Dorsolateral prefrontal cortex (tissue), 120 donors: ENCODE measurements at regions of chr2 and their contacts with region 1.

Region 1: DNA sequence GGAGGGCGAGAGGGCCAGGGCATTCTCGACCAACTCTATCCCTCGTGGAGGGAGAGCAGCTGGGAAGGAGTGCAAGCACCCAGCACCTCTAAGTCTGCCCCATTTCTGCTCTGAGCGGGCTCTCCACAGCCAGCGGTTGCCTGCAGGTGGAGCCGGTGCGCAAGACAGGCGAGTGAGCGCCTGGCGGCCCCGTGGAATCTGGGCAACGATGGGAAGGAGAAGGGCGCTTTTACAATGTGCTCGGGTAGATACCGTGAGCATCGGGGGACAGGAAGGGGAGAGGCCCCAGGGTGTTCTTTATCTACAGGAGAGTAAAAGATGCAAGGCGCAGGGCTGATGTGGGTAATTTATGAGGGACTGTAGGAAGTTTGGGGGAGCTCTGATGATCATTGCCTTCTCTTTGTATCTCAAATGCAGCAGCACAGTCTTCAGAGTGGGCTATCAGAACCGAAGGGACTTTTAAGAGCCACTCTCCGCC is 867 bp upstream of the TTL start:
- DNase-seq: peak; percentile 77 to 92 (median 86)
- H3K4me3 ChIP-seq: peak overlapping the region; percentile 57 to 97 (median 83)
- H3K27ac ChIP-seq: peak overlapping the region; percentile 74 to 97 (median 91)
- H3K27me3 ChIP-seq: no peaks in the 10 kb centered on the region
- CTCF ChIP-seq: peak; percentile 51 to 95 (median 83)

Region 2: DNA sequence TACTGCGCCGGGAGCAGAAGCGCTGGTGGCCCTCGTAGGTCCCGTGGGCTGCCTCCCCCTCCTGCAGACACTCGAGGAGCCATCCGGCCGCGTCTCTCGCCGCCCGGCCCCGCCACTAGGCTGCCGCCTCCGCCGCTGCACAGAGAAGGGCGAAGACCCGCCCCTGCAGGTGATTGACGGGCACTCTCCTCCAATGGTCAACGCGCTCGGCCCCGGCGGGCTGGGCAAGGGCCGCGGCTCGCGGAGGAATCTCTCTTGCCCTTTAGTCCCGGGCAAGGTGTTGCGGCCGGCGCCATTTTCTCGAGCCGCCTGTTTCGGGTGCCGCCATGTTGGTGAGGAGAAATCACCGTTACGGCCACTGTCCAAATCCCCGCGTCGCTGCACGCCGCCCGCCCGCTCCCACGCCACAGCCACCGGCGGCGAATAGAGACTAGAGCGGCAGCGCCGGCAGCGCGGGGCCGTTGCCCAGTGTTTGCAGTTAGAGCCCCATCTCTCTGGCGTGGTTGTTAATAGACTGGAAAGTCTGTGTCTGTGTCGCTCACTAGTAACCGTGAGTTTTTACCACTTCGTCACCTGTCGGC is 205.7 kb before region 1 on chr2 and contains the start of gene ZC3H6:
- intact Hi-C with region 1: loop called (anchors 5 kb)
- DNase-seq: peak; percentile 97 to 100 (median 99)
- H3K4me3 ChIP-seq: peak within 1 kb of the TSS; percentile 68 to 99 (median 90)
- H3K27ac ChIP-seq: peak within 1 kb of the TSS; percentile 98 to 100 (median 100)
- H3K27me3 ChIP-seq: no peaks in the 10 kb centered on the region
- CTCF ChIP-seq: peak in 49 of 56 donors; percentile 9 to 68 (median 42)
- total RNA-seq, gene ZC3H6: 20.4 to 50.4 (median 36.4) TPM

Region 3: GRCh38 chr2:112304298-112304941 is 176.7 kb before region 1 on chr2:
- intact Hi-C with region 1: no loop called
- DNase-seq: no peak
- H3K4me3 ChIP-seq: no peak overlapping the region
- H3K27ac ChIP-seq: peak overlapping the region in 3 of 59 donors; percentile 2 to 12 (median 10)
- H3K27me3 ChIP-seq: no peaks in the 10 kb centered on the region
- CTCF ChIP-seq: no peak

Region 4: GRCh38 chr2:112343827-112344585 is 137.1 kb before region 1 on chr2:
- intact Hi-C with region 1: no loop called
- DNase-seq: no peak
- H3K4me3 ChIP-seq: no peak overlapping the region
- H3K27ac ChIP-seq: no peak overlapping the region
- H3K27me3 ChIP-seq: no peaks in the 10 kb centered on the region
- CTCF ChIP-seq: no peak

Region 5: GRCh38 chr2:112542123-112542983 is 61.3 kb after region 1 on chr2 and contains the start of gene POLR1B:
- intact Hi-C with region 1: loop called (anchors 1 kb)
- DNase-seq: peak; percentile 79 to 91 (median 88)
- H3K4me3 ChIP-seq: peak within 1 kb of the TSS; percentile 68 to 100 (median 95)
- H3K27ac ChIP-seq: peak within 1 kb of the TSS; percentile 84 to 99 (median 96)
- H3K27me3 ChIP-seq: no peaks in the 10 kb centered on the region
- CTCF ChIP-seq: peak in 17 of 56 donors; percentile 9 to 46 (median 30)
- total RNA-seq, gene POLR1B: 10.4 to 27.6 (median 17.8) TPM

Region 6: DNA sequence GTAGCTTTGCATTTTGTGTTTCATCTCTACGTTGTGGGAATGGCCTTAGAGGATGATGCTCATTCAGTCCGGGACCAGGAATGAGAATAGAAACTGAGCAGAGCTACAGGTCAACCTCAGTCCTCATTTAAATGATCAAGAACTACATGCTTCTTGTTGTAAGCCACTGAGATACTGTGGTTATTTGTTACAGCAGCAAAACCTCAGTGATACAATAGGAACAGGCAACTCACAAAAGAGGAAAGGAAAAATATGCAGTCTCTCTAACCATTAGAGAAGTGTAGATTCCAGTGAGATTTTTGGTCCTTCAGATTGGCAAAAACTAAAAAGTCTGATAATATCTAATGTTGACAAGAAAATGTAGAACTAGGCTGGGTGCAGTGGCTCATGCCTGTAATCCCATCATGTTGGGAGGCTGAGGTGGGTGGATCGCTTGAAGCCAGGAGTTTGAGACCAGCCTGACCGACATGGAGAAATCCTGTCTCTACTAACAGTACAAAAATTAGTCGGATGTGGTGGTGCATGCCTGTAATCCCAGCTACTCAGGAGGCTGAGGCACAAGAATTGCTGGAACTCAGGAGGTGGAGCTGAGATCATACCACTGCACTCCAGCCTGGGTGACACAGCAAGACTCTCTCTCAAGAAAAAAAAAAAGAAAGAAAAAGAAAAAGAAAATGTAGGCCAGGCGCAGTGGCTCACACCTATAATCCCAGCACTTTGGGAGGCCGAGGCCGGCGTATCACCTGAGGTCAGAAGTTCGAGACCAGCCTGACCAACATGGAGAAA is 116.6 kb after region 1 on chr2:
- intact Hi-C with region 1: no loop called
- DNase-seq: no peak
- H3K4me3 ChIP-seq: no peak overlapping the region
- H3K27ac ChIP-seq: no peak overlapping the region
- H3K27me3 ChIP-seq: no peaks in the 10 kb centered on the region
- CTCF ChIP-seq: no peak

Region 7: GRCh38 chr2:112768432-112768831 is 287.3 kb after region 1 on chr2:
- intact Hi-C with region 1: no loop called
- DNase-seq: no peak
- H3K4me3 ChIP-seq: peak overlapping the region in 1 of 59 donors; percentile 14
- H3K27ac ChIP-seq: peak overlapping the region in 4 of 59 donors; percentile 9 to 28 (median 26)
- H3K27me3 ChIP-seq: no peaks in the 10 kb centered on the region
- CTCF ChIP-seq: no peak